Heart left ventricle (tissue), 16 donors: ENCODE measurements at regions of chr3 and their contacts with region 1.

Region 1: DNA sequence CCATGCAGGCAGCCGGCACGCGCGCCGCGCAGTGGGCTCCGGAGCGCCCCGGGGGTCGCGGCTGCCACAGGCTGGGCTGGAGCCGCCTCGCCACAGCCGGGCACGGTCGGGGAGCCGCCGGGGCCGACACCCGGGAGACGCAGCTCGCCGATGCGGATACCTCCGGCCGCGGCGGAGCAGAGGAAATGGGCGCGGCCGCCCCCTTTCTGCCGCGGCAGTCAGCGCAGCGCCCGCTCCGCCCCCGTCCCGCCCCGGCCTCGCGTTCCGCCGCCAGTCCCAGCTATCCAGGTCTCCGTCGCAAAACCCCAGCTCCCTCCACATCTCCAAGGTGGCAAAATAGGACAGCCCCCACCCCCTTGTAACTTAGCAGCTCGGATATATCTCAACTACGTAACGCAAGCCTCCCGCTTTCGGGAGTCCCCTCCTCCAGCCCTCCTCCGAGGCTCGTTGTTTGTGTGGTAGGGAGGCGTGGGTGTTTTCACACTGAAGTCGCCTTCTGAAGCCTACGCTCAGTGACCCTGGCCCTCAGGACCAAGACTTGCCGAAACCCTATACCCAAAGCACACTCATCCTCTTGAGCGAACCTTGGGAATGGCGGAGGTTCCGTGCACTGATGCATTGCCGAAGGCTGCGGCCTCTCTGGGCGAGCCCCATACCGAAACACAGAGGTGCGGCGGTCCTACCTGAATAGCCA is at the start of gene SH3BP5:
- DNase-seq: peak; percentile 79 to 87 (median 83)
- ATAC-seq: peak; percentile 57 to 94 (median 89)
- H3K4me3 ChIP-seq: peak within 1 kb of the TSS; percentile 64 to 96 (median 88)
- H3K27ac ChIP-seq: peak within 1 kb of the TSS; percentile 71 to 91 (median 82)
- H3K4me1 ChIP-seq: peaks cover 0 to 50% (median 30%) of the 10 kb centered on the region in 12 donors
- H3K27me3 ChIP-seq: no peaks in the 10 kb centered on the region
- CTCF ChIP-seq: peak; percentile 56 to 90 (median 82)
- POLR2A ChIP-seq: peak in 1 of 2 donors; percentile 69
- total RNA-seq, gene SH3BP5: 4.9 to 28.6 (median 11.7) TPM

Region 2: DNA sequence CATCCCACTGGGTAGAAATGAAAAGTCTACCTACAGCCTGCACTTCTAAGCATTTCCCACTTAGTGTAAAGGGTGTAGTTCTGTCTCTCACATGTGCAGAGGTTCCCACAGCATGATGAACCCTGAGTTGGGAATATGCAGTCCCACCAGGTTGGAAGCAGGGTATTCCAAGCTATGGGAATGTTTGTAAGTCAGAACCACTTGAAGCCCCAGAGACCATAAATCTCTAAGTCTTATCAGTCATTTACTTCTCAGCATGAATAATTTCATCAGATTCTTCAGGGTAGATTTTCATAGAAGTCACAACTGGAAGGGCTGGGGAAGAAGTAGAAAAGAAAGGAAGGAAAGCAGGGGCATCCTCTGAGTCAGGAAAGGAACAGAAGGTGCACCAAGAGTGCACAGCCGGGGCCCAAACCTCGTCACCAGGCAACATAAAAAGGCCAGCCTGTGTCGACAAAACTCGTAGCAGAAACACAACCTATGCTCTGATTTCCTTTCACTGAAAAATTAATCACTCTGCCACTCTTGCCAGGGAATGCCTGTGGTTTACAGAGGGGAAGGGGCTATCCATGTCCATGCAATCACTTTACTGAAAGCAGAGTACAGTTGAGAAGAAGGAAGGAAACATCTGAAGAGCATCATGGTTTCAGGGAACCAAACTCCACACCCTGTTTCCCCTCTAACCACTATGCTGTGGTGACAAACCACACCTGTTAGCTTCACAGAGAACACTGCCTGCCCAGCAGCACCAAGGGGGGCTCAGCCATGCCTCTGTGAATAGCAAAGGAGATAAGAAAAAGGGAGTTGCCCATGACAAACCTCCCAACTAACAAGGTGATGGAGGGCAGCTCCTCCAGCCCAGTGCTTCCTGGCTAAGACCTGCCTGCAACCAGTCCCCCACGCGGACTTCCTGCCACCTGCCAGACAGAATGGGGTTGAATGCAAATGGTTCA is 40.7 kb before region 1 on chr3:
- intact Hi-C with region 1: loop called in 1 of 10 experiments (anchors 5 kb)
- DNase-seq: no peak
- ATAC-seq: peak in 2 of 4 donors; percentile 11 to 20
- H3K4me3 ChIP-seq: no peak overlapping the region
- H3K27ac ChIP-seq: peak overlapping the region in 8 of 12 donors; percentile 43 to 96 (median 58)
- H3K4me1 ChIP-seq: peaks cover 0 to 99% (median 32%) of the 10 kb centered on the region in 12 donors
- H3K27me3 ChIP-seq: no peaks in the 10 kb centered on the region
- CTCF ChIP-seq: no peak
- POLR2A ChIP-seq: no peak

Region 3: DNA sequence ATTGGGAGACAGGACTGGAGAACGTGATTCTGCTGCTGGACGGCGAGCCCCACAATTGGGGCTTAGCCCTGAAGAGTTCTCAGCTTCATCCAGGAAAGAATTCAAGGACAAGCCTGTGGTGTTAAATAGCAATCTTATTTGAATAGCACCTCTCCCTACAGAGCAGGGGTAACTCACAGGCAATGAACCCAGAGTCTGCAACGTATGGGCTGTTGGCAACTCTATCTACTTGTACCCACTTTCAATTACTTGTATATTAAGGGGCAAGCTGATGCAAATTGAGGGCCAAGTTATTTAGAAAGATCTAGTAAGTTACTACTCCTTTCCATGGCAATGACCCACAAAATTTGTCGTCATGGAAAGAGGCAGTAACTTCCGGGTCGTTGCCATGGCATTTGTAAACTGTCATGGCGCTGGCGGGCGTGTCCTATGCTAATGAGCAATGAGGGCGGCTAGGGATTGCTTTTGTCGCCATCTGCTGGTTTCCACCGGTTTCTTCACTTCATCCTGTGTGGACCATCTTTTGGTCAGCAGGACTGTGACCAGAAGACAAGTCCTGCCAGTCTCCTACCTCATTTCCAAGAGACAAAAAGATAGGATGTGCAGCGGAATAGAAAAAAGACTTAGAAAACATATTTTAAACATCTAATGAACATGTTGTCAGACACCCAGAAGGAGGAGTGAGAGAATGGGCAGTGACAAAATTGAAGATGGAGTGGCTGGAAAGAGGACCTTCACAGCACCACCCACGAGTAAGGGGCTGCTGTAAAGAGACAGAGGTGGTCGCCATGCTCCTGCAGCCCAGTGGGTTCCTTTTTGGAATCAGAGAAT is 45.6 kb after region 1 on chr3:
- intact Hi-C with region 1: loop called in 5 of 10 experiments (anchors 1 to 5 kb)
- DNase-seq: peak; percentile 92 to 97 (median 94)
- ATAC-seq: peak; percentile 97 to 98 (median 98)
- H3K4me3 ChIP-seq: peak overlapping the region in 3 of 12 donors; percentile 0 to 25 (median 20)
- H3K27ac ChIP-seq: peak overlapping the region in 8 of 12 donors; percentile 8 to 73 (median 56)
- H3K4me1 ChIP-seq: peaks cover 0 to 6% (median 0%) of the 10 kb centered on the region in 12 donors
- H3K27me3 ChIP-seq: no peaks in the 10 kb centered on the region
- CTCF ChIP-seq: peak; percentile 68 to 91 (median 82)
- POLR2A ChIP-seq: peak in 1 of 2 donors; percentile 33